ENCODE measurements at regions of chr15 and their contacts with region 1.

Region 1: GRCh38 chr15:74373731-74374647 is 6.5 kb upstream of the CYP11A1 start:
- DNase-seq: peak; percentile 97
- ATAC-seq: peak; percentile 90
- H3K4me3 Mint-ChIP-seq: peak overlapping the region; percentile 74
- H3K27ac Mint-ChIP-seq: peak overlapping the region; percentile 63
- H3K4me1 Mint-ChIP-seq: peaks cover 39% of the 10 kb centered on the region
- H3K27me3 Mint-ChIP-seq: peaks cover 6% of the 10 kb centered on the region
- CTCF ChIP-seq: peak; percentile 92

Region 2: GRCh38 chr15:73717802-73718201 is 656.2 kb before region 1 on chr15:
- CTCF ChIA-PET with region 1: no interaction called
- POLR2A ChIA-PET with region 1: no interaction called
- intact Hi-C with region 1: no loop called
- DNase-seq: no peak
- ATAC-seq: no peak
- H3K4me3 Mint-ChIP-seq: no peak overlapping the region
- H3K27ac Mint-ChIP-seq: no peak overlapping the region
- H3K4me1 Mint-ChIP-seq: no peaks in the 10 kb centered on the region
- H3K27me3 Mint-ChIP-seq: peaks cover 10% of the 10 kb centered on the region
- CTCF ChIP-seq: no peak

Region 3: DNA sequence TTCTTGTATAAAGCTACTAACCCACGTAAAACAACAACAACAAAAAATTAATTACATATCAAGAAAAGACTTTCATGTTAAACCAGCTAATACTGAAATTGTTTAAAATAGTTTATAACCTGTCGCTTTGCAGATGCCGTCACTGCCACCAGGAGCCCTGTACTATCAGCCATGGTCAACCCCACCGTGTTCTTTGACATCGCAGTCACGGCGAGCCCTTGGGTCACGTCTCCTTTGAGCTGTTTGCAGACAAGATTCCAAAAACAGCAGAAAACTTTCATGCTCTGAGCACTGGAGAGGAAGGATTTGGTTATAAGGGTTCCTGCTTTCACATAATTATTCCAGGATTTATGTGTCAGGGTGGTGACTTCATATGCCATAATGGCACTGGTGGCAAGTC is 12.6 kb before region 1 on chr15:
- CTCF ChIA-PET with region 1: interaction called, 11 read pairs
- POLR2A ChIA-PET with region 1: no interaction called
- intact Hi-C with region 1: no loop called
- DNase-seq: no peak
- ATAC-seq: no peak
- H3K4me3 Mint-ChIP-seq: no peak overlapping the region
- H3K27ac Mint-ChIP-seq: no peak overlapping the region
- H3K4me1 Mint-ChIP-seq: peaks cover 3% of the 10 kb centered on the region
- H3K27me3 Mint-ChIP-seq: peaks cover 14% of the 10 kb centered on the region
- CTCF ChIP-seq: no peak

Region 4: DNA sequence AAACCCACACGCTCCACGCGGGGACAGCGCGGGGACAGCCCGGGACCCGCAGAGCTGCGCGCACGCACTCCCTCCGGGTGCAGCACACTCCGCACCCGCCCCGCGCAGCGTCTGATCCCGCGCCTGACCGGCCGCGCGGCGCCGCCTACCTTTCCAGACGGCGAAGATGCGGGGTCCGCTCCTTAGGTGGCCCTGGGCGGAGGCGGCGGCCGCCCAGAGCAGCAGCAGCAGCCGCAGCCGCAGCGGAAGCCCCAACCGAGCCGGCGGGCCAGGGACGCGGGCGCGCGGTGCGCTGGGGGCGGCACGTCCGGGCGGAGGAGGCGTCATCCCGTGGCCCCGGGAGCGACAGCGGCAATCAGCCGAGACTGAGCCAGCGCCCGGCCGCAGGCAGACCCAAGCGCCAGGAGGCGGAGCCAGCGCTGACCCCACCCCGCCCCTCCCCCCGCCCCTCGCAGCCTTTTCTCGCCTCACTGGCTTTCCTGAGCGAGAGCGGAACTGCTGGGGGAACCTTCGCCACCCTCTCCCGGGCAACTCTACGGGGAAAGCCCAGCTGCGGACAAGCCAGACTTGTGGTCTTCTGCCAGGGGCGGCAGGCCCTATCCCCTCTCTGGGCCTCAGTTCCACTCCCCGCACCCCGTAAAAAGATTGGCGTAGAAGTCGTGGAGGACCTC is 59.7 kb after region 1 on chr15 and contains the start of gene SEMA7A:
- CTCF ChIA-PET with region 1: interaction called, 840 read pairs
- POLR2A ChIA-PET with region 1: interaction called, 14 read pairs
- intact Hi-C with region 1: loop called (anchors 2 kb)
- DNase-seq: peak; percentile 85
- ATAC-seq: peak; percentile 89
- H3K4me3 Mint-ChIP-seq: peak within 1 kb of the TSS; percentile 93
- H3K27ac Mint-ChIP-seq: peak within 1 kb of the TSS; percentile 89
- H3K4me1 Mint-ChIP-seq: peaks cover 64% of the 10 kb centered on the region
- H3K27me3 Mint-ChIP-seq: no peaks in the 10 kb centered on the region
- CTCF ChIP-seq: no peak
- total RNA-seq, gene SEMA7A: 62.4 TPM

Region 5: DNA sequence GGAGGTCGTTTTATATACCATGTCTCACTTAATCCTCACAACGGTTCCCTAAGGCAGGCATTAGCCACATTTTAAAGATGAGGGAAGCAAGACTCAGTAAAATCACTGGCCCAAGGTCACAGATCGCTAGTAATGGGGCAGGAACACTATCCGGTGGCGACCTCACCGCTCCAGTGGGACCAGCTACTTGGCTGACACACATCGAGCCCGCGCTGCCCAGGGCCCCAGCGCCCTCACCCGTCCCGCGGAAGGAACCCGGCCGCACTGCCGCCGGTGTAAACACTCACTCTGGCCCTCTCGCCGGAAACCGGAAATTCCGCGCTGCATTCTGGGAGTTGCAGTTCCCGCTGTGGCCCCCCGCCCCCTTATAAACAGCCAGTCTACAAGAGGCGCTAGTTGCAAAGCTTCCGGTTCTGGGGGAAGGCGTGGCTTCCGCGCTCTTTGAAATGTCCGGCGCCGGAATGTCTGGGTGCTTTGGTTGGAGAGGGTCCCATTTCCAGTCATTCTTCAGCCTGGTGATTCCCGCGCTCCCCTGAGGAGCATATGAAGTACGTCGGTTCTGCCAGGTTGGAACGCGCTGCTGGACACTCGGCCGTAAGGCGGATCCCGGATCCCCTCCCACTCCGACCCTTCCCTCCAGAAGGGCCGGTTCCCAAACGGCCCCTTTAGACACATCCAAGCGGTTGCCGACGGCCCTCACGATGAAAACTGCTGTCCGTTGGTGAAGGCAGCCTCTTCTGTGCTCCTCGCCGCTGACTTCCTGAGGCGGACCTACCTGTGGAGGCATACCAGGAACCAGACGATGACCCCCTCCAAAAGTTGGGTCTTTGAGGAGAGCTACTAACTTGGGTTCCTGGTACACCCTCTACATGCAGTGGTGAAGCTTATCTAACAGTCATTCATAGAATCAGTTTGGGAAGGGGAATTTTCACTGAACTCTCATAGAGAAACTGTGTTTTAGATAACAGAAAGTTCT is 87.2 kb after region 1 on chr15 and contains the start of gene UBL7:
- CTCF ChIA-PET with region 1: interaction called, 840 read pairs
- POLR2A ChIA-PET with region 1: interaction called, 12 read pairs
- intact Hi-C with region 1: no loop called
- DNase-seq: peak; percentile 99
- ATAC-seq: peak; percentile 97
- H3K4me3 Mint-ChIP-seq: peak within 1 kb of the TSS; percentile 80
- H3K27ac Mint-ChIP-seq: peak within 1 kb of the TSS; percentile 92
- H3K4me1 Mint-ChIP-seq: peaks cover 49% of the 10 kb centered on the region
- H3K27me3 Mint-ChIP-seq: no peaks in the 10 kb centered on the region
- CTCF ChIP-seq: no peak
- total RNA-seq, gene UBL7: 48.8 to 53.3 TPM

Region 6: DNA sequence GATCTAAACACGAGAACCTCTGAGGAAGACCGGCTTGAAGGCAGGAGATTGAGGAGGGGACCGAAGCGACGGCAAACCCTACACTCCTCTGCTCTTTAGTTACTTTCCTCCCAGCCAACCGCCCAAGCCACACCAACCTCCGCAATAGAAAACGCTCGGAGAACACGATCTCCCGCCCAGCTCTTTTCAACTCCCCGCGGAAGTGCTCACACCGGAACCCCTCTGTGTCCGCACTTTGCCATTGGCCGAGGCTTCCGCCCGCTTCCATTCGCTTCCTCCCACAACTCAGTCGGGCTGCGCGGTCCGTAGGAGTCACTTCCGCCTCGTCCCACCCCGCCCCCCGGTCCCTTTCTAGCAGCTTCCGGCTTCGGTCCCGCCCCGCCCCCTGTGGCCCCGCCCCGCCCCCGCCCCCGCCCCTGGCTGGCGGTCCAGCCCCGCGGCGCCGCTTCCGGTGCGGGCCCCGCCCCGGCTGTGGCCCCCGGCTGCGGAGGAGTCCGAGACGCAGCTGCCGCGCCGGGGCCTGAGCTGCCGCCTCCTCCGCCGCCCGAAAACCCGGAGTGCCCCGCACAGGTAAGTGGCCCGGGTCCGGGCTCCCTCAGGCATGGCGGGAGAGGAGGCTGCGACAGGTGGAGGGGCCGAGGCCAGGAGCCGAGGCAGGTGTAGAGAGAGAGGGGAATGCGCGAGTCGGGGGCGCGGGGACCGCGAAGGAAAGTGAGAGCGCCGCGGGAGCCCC is 166.9 kb after region 1 on chr15 and contains the start of gene ARID3B:
- CTCF ChIA-PET with region 1: interaction called, 5 read pairs
- POLR2A ChIA-PET with region 1: interaction called, 3 read pairs
- intact Hi-C with region 1: loop called (anchors 5 kb)
- DNase-seq: peak; percentile 99
- ATAC-seq: peak; percentile 88
- H3K4me3 Mint-ChIP-seq: peak within 1 kb of the TSS; percentile 98
- H3K27ac Mint-ChIP-seq: peak within 1 kb of the TSS; percentile 99
- H3K4me1 Mint-ChIP-seq: peaks cover 48% of the 10 kb centered on the region
- H3K27me3 Mint-ChIP-seq: no peaks in the 10 kb centered on the region
- CTCF ChIP-seq: no peak
- total RNA-seq, gene ARID3B: 35.2 to 36.2 TPM

Region 7: DNA sequence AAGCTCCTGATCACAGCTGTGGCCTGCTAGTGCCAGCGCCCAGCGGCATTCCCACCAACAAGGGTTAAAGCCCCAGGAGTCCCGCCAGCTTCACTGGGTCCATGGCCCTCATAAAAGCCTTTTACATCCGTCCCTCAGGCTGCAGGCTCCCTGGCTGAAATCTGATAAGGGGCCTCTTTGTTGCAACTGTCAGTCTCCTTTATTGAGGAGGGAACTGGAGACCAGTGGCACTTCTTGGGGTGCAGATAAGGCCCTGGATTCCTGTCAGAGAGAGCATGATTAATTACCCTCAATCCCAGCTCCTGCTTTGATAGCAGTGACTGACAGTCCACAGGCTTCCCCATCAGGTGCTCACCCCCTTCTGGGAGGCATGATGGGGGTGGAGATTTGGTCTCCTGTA is 210.8 kb after region 1 on chr15:
- CTCF ChIA-PET with region 1: no interaction called
- POLR2A ChIA-PET with region 1: no interaction called
- intact Hi-C with region 1: no loop called
- DNase-seq: no peak
- ATAC-seq: no peak
- H3K4me3 Mint-ChIP-seq: no peak overlapping the region
- H3K27ac Mint-ChIP-seq: no peak overlapping the region
- H3K4me1 Mint-ChIP-seq: peaks cover 2% of the 10 kb centered on the region
- H3K27me3 Mint-ChIP-seq: no peaks in the 10 kb centered on the region
- CTCF ChIP-seq: no peak

Region 8: GRCh38 chr15:74620636-74621545 is 246.9 kb after region 1 on chr15:
- CTCF ChIA-PET with region 1: interaction called, 47 read pairs
- POLR2A ChIA-PET with region 1: interaction called, 6 read pairs
- intact Hi-C with region 1: no loop called
- DNase-seq: peak; percentile 89
- ATAC-seq: peak; percentile 96
- H3K4me3 Mint-ChIP-seq: no peak overlapping the region
- H3K27ac Mint-ChIP-seq: peak overlapping the region; percentile 77
- H3K4me1 Mint-ChIP-seq: peaks cover 60% of the 10 kb centered on the region
- H3K27me3 Mint-ChIP-seq: no peaks in the 10 kb centered on the region
- CTCF ChIP-seq: peak; percentile 98

Measured in activated CD8-positive, alpha-beta T cell treated with anti-CD3 and anti-CD28 coated beads for 36 hours (primary cell).